ENCODE measurements at regions of chr7 and their contacts with region 1.

Region 1: GRCh38 chr7:100435401-100436304 is 644 bp downstream of the PPP1R35 start:
- DNase-seq: peak in 4 of 10 donors; percentile 19 to 58 (median 40)
- H3K4me3 ChIP-seq: peak overlapping the region; percentile 66 to 98 (median 84)
- H3K27ac ChIP-seq: peak overlapping the region; percentile 40 to 99 (median 93)
- H3K27me3 ChIP-seq: no peaks in the 10 kb centered on the region
- CTCF ChIP-seq: no peak

Region 2: DNA sequence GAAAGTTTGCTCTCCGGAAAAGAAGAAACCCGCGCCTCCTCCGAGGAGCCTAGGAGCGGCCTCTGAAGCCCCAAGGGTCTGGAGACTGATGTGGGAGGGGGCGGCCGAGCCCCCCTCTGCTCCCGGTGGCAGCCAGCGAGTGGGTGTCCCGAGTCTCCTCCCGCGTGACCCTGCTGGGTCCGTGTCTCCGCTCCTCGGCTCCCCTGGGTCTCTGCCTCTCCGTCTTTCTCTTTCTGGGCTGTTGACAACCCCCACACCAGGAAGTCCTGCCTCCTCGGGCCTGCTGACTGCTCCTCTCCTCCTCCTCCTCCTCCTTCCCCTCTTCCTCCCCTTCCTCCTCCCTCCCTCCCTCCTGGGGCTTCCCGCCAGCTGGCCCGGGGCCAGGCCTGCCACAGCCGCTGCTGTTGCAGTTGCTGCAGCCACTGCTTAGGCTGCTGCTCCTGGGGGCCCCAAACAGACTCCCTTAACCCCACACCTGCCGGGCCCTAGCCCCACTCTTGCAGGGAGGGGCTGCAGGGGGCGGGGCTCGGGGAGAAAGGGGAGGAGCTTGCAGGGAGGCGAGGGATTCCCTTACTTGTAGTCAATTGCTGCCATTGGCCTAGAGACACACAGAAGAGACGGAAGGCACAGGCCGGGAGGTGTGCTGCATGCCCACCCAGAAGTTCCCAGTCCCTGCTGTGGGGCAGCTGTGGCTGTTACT is 43.5 kb after region 1 on chr7 and contains the start of gene TSC22D4:
- intact Hi-C with region 1: loop called in 1 of 2 experiments (anchors 1 kb)
- DNase-seq: peak; percentile 85 to 97 (median 96)
- H3K4me3 ChIP-seq: peak within 1 kb of the TSS; percentile 74 to 100 (median 95)
- H3K27ac ChIP-seq: peak within 1 kb of the TSS; percentile 55 to 98 (median 94)
- H3K27me3 ChIP-seq: no peaks in the 10 kb centered on the region
- CTCF ChIP-seq: peak in 25 of 56 donors; percentile 3 to 49 (median 24)
- total RNA-seq, gene TSC22D4: 142 to 595 (median 270) TPM